ENCODE measurements at regions of chr13 and their contacts with region 1.

Region 1: DNA sequence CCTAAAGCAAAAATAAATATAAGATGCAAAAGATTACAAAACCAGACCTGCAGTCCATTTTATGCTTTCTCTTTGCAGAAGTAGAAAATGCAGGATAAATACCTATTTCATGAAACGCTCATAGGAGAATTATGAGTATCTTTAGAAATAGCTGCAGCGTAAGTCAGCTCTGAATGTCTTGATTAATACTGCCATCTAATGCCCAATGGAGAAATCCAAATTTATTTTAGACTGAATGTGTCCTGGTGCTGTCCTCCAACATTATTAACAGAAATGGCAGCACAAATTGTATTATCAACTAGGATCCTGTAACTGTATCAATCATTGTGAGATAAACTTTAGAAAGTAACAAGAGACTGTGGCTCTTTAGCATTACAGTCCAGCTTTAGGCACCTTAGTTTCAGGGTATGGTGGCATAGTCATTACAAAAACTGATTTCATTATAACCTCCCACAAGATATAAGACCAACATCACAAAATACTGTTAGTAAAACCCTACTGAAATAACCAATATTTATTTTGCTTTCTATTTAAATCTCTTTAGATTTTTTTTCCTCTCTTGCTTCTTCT is 162.1 kb upstream of the MIR17HG start:
- DNase-seq: peak; percentile 45 to 74 (median 68)
- H3K4me3 ChIP-seq: no peak overlapping the region
- H3K27ac ChIP-seq: no peak overlapping the region
- H3K4me1 ChIP-seq: peaks cover 0 to 24% (median 5%) of the 10 kb centered on the region in 4 experiments
- H3K27me3 ChIP-seq: no peaks in the 10 kb centered on the region

Region 2: GRCh38 chr13:91078093-91078679 is 107.2 kb before region 1 on chr13:
- CTCF ChIA-PET with region 1: interaction called, 16 read pairs
- POLR2A ChIA-PET with region 1: no interaction called
- DNase-seq: peak; percentile 47 to 72 (median 62)
- H3K4me3 ChIP-seq: no peak overlapping the region
- H3K27ac ChIP-seq: no peak overlapping the region
- H3K4me1 ChIP-seq: no peaks in the 10 kb centered on the region
- H3K27me3 ChIP-seq: no peaks in the 10 kb centered on the region

Region 3: DNA sequence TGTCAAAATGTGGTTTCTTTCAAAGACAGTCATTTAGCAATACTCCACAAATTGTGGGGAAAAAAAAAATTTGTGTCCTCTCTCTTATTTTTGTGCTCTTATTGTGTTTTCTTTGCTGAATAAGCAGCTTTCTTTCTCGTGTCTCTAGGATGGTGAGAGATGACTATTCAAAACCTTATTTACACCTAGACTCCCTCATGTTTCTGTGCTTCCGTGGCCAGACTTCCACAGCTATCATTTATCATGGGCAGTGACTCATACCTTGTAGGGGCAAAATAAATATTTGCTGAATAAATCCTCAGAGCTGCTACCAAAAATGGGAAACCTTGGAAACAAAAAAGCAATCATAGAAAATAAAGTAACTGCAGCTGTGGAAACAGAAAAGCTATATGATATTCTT is 42.8 kb before region 1 on chr13:
- CTCF ChIA-PET with region 1: interaction called, 51 read pairs
- POLR2A ChIA-PET with region 1: no interaction called
- DNase-seq: peak in 2 of 3 donors; percentile 72 to 80
- H3K4me3 ChIP-seq: no peak overlapping the region
- H3K27ac ChIP-seq: no peak overlapping the region
- H3K4me1 ChIP-seq: peaks cover 8 to 19% (median 13%) of the 10 kb centered on the region in 4 experiments
- H3K27me3 ChIP-seq: no peaks in the 10 kb centered on the region

Region 4: GRCh38 chr13:91162180-91162579 is 23.2 kb before region 1 on chr13:
- CTCF ChIA-PET with region 1: interaction called, 21 read pairs
- POLR2A ChIA-PET with region 1: no interaction called
- DNase-seq: peak; percentile 34 to 56 (median 49)
- H3K4me3 ChIP-seq: no peak overlapping the region
- H3K27ac ChIP-seq: no peak overlapping the region
- H3K4me1 ChIP-seq: peaks cover 13 to 44% (median 22%) of the 10 kb centered on the region in 4 experiments
- H3K27me3 ChIP-seq: no peaks in the 10 kb centered on the region

Region 5: GRCh38 chr13:91216928-91217690 is 31.7 kb after region 1 on chr13:
- CTCF ChIA-PET with region 1: interaction called, 17 read pairs
- POLR2A ChIA-PET with region 1: interaction called, 4 read pairs
- DNase-seq: no peak
- H3K4me3 ChIP-seq: no peak overlapping the region
- H3K27ac ChIP-seq: no peak overlapping the region
- H3K4me1 ChIP-seq: peaks cover 19 to 74% (median 33%) of the 10 kb centered on the region in 4 experiments
- H3K27me3 ChIP-seq: no peaks in the 10 kb centered on the region

Measured in common myeloid progenitor, CD34-positive (primary cell).